SK-N-SH (cell line): ENCODE measurements at regions of chr7 and their contacts with region 1.

Region 1: DNA sequence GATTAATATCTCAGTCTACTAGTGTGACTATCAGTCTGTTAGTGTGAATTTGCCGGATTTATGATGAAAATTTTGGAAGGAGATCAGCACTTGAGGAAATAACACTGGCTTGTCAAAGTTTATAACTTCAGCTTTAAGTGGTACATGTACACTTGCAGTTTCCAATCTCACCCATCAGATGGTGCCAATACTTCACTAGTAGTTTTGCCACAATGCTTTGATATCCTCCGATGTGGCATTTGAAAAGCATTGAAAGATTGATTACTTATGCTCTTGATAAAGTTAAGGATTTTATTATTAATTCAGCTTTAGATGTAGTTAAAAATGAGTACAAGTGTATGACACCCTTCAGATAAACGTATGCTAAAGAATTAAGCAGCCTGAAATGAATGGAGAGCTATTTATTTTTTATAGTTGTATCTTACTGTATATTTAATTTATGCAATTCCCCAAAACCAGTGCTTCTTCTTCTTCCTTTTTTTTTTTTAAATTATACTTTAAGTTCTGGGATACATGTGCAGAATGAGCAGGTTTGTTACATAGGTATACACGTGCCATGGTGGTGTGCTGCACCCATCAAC is 98.2 kb downstream of the ANLN start:
- DNase-seq: peak; percentile 63
- H3K4me3 ChIP-seq: no peak overlapping the region; a peak in 1 of 4 replicates
- H3K27ac ChIP-seq: no peak overlapping the region
- H3K4me1 ChIP-seq: 0 out of 4 replicates have a peak, but pooled peaks cover 0 to 2% of the 10 kb centered on the region in 2 experiments
- H3K27me3 ChIP-seq: no peaks in the 10 kb centered on the region
- CTCF ChIP-seq: peak; percentile 99
- EP300 ChIP-seq: peak in 1 of 2 experiments; percentile 14; a peak in 1 of 4 replicates
- RAD21 ChIP-seq: peak; percentile 100

Region 2: GRCh38 chr7:36448781-36449379 is 39.0 kb before region 1 on chr7:
- CTCF ChIA-PET with region 1: interaction called, 12 read pairs
- POLR2A ChIA-PET with region 1: no interaction called
- DNase-seq: no peak
- H3K4me3 ChIP-seq: no peak overlapping the region
- H3K27ac ChIP-seq: peak overlapping the region; percentile 13 to 55; a peak in 3 of 4 replicates
- H3K4me1 ChIP-seq: peaks cover 3 to 21% of the 10 kb centered on the region in 2 experiments
- H3K27me3 ChIP-seq: no peaks in the 10 kb centered on the region
- CTCF ChIP-seq: no peak
- EP300 ChIP-seq: peak in 1 of 2 experiments; percentile 36; a peak in 1 of 4 replicates
- RAD21 ChIP-seq: no peak

Region 3: GRCh38 chr7:36514289-36515243 is 26.7 kb after region 1 on chr7:
- CTCF ChIA-PET with region 1: interaction called, 25 read pairs
- POLR2A ChIA-PET with region 1: no interaction called
- DNase-seq: peak; percentile 66
- H3K4me3 ChIP-seq: no peak overlapping the region
- H3K27ac ChIP-seq: peak overlapping the region in 1 of 2 experiments; percentile 3; a peak in 2 of 4 replicates
- H3K4me1 ChIP-seq: peaks cover 0 to 12% of the 10 kb centered on the region in 2 experiments; a peak in 1 of 4 replicates
- H3K27me3 ChIP-seq: no peaks in the 10 kb centered on the region
- CTCF ChIP-seq: no peak
- EP300 ChIP-seq: peak in 1 of 2 experiments; percentile 60; a peak in 2 of 4 replicates
- RAD21 ChIP-seq: peak; percentile 3; the same call in 1 of the 2 replicates

Region 4: GRCh38 chr7:36683695-36684357 is 196.0 kb after region 1 on chr7:
- CTCF ChIA-PET with region 1: interaction called, 13 read pairs
- POLR2A ChIA-PET with region 1: no interaction called
- DNase-seq: no peak
- H3K4me3 ChIP-seq: no peak overlapping the region
- H3K27ac ChIP-seq: no peak overlapping the region
- H3K4me1 ChIP-seq: no peaks in the 10 kb centered on the region; a peak in 2 of 4 replicates
- H3K27me3 ChIP-seq: no peaks in the 10 kb centered on the region
- CTCF ChIP-seq: no peak
- EP300 ChIP-seq: no peak
- RAD21 ChIP-seq: no peak

Region 5: DNA sequence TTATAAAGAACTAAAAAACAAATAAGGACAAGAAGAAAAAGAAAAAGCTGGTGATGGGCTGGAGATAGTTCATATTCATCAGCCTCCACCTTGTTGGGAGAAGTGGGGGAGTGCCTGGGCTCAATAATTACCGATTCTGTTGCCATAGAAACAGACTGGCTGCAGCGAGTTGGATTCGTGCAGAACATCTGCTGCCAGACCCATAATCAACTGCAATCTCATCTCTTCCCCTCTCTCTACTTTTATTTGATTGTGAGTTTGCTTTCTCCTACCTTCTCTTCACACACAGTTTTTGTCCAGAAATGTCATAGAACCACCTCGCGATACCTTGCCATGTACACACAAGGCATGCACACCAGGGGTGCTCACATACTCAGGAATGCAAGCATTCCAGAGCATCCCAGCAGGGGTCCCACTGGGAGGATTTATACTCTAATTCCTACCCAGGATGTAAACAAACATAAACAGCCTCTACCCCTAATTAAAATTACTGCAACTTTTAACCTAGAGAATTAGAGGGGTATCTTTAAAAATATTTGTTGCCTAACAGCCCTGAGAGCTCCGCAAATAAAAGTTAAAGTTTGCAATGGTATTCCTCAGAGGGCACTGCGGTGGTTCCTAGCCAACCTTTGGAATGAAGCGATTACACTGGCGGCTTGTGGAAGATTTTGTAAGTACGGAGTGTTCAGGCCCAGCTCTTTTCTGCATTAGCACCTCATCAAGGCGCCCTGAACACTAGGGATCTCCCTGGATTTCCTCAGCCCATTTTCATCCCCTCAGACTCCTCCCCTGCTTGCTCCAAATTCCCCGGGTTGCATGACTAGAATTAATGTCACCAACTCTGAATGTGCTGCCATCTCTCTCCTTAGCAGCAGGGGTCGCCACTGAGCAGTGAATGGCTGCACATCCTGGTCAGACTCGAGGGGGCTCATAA is 498.9 kb after region 1 on chr7:
- CTCF ChIA-PET with region 1: interaction called, 162 read pairs
- POLR2A ChIA-PET with region 1: no interaction called
- DNase-seq: peak; percentile 79
- H3K4me3 ChIP-seq: peak overlapping the region; percentile 6 to 56; a peak in 3 of 4 replicates
- H3K27ac ChIP-seq: peak overlapping the region in 1 of 2 experiments; percentile 93; a peak in 2 of 4 replicates
- H3K4me1 ChIP-seq: peaks cover 0 to 35% of the 10 kb centered on the region in 2 experiments; a peak in 2 of 4 replicates
- H3K27me3 ChIP-seq: peaks cover 32% of the 10 kb centered on the region; the same call in 1 of the 2 replicates
- CTCF ChIP-seq: peak; percentile 99
- EP300 ChIP-seq: peak in 1 of 2 experiments; percentile 49; a peak in 2 of 4 replicates
- RAD21 ChIP-seq: peak; percentile 91

Region 6: GRCh38 chr7:37181550-37181932 is 693.7 kb after region 1 on chr7:
- CTCF ChIA-PET with region 1: interaction called, 303 read pairs
- POLR2A ChIA-PET with region 1: interaction called, 4 read pairs
- DNase-seq: no peak
- H3K4me3 ChIP-seq: no peak overlapping the region
- H3K27ac ChIP-seq: no peak overlapping the region
- H3K4me1 ChIP-seq: peaks cover 0 to 2% of the 10 kb centered on the region in 2 experiments; a peak in 1 of 4 replicates
- H3K27me3 ChIP-seq: no peaks in the 10 kb centered on the region
- CTCF ChIP-seq: no peak
- EP300 ChIP-seq: no peak
- RAD21 ChIP-seq: no peak